Activated CD4-positive, alpha-beta memory T cell treated with anti-CD3 and anti-CD28 coated beads for 36 hours (primary cell): ENCODE measurements at regions of chr7 and their contacts with region 1.

Region 1: GRCh38 chr7:130063036-130063435 is 7.3 kb upstream of the KLHDC10 start:
- DNase-seq: peak; percentile 83
- H3K4me3 Mint-ChIP-seq: no peak overlapping the region
- H3K27ac Mint-ChIP-seq: no peak overlapping the region
- H3K4me1 Mint-ChIP-seq: no peaks in the 10 kb centered on the region
- H3K27me3 Mint-ChIP-seq: peaks cover 5% of the 10 kb centered on the region

Region 2: DNA sequence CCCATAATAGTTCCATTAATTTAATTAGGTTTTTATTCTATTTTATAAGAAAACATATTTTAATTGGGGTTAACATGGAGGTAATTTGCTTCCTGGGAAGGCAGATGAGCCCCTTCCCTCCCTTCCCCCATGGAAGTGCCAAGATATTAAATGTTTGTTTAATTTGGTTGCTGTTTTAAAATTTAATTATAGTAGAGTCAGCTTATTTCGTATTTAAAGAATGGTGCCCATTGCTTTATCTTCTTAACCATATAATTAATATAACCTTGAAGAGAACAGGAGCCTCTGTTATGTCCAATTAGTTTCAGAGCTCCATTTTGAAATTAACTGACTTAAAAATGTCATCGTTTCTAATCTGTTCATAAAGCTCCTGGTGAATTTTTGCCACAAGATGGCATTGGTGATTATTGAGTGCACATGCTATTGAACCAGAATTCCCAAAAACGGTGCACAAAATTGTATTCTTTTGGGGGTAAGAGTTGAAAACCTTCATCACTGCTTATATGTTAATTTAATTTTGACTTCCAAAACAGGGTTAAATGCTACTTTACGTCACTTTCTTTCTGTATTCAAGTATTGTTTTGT is 33.3 kb after region 1 on chr7:
- CTCF ChIA-PET with region 1: no interaction called
- POLR2A ChIA-PET with region 1: no interaction called
- intact Hi-C with region 1: no loop called
- DNase-seq: no peak
- H3K4me3 Mint-ChIP-seq: no peak overlapping the region
- H3K27ac Mint-ChIP-seq: no peak overlapping the region
- H3K4me1 Mint-ChIP-seq: peaks cover 12% of the 10 kb centered on the region
- H3K27me3 Mint-ChIP-seq: no peaks in the 10 kb centered on the region

Region 3: DNA sequence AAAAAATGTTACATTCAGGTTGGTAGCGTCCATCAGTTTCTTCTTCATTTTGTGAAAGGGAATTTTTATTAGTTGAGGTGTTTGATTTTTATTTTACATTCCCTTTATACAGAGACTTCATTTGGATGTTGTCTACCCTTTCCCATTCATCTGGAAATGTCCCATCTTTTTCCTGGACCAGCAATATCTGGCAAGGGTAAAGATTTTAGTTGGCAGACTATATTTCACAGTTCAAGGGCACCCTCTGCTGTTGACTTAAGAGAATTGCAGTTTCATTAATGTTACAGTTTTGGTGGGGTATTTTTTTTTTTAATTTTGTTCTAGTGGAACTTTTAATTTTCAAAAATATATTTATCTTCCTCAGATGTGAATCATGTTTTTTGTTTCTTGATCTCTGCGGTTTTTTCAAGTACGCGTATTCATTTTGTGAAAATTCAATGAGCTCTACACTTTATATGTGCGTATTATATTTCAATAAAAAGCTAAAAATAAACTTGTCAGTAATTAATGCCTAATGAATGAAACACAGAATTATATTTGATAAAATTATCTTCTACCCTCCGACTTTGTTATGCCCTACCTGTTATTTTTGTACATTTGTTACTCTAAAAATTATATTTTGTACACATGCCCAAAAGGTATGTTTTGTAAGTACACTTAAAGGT is 768.9 kb after region 1 on chr7:
- CTCF ChIA-PET with region 1: interaction called, 6 read pairs
- POLR2A ChIA-PET with region 1: no interaction called
- intact Hi-C with region 1: loop called (anchors 2 kb)
- DNase-seq: no peak
- H3K4me3 Mint-ChIP-seq: no peak overlapping the region
- H3K27ac Mint-ChIP-seq: no peak overlapping the region
- H3K4me1 Mint-ChIP-seq: no peaks in the 10 kb centered on the region
- H3K27me3 Mint-ChIP-seq: peaks cover 23% of the 10 kb centered on the region